Motor neuron (in vitro differentiated cells): ENCODE measurements at regions of chr14 and their contacts with region 1.

Region 1: DNA sequence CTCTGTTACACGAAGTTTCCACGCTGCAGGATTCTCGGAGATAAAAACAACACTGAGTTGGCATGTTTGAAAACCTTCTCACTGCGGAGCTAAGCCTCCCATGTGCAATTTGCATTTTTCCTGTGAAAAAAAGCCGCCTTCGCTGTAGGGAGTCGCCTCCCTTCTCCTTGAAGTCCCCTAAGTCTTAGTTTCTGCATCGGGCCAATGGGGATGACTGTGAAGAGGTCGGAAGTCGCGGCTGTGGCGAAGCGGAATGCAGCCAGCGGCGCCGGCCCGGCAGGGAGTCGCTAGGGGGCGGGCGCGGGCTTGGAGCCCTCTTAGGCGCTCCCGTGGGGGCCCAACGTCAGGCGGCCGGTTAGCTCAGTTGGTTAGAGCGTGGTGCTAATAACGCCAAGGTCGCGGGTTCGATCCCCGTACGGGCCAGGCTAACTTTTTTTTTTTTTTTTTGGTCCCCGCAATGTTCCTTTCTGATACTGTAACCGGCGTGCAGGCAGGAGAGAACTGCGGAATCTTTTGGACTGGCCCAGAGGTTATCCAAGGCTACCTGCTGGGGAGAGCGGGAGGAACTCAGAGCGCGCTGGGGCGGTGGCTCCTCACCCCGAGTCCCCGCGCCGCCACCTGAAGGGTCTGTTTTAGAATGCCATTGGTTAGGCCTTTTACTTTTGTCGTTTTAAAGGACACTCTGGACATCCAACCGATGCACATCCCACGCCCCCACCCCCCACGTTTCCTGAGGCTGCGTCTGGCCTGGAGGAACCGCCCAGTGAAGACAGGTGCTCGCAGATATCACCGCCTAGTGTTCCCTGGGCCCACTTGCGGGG is 2.6 kb upstream of the ZNF839 start:
- ATAC-seq: peak; percentile 65 to 81 (median 74)
- H3K4me3 ChIP-seq: peak overlapping the region; percentile 40 to 53 (median 46)
- H3K27ac ChIP-seq: peak overlapping the region; percentile 44 to 78
- H3K4me1 ChIP-seq: peaks cover 17 to 25% of the 10 kb centered on the region in 2 donors

Region 2: GRCh38 chr14:101739446-101740141 is 577.4 kb before region 1 on chr14:
- in situ Hi-C with region 1: no loop called
- ATAC-seq: no peak
- H3K4me3 ChIP-seq: no peak overlapping the region
- H3K27ac ChIP-seq: no peak overlapping the region
- H3K4me1 ChIP-seq: no peaks in the 10 kb centered on the region

Region 3: GRCh38 chr14:101964297-101965144 is 352.4 kb before region 1 on chr14 and contains the start of gene DYNC1H1:
- in situ Hi-C with region 1: loop called in 5 of 9 experiments (anchors 25 kb)
- ATAC-seq: peak; percentile 63 to 90 (median 88)
- H3K4me3 ChIP-seq: peak within 1 kb of the TSS; percentile 82 to 99 (median 94)
- H3K27ac ChIP-seq: peak within 1 kb of the TSS; percentile 83 to 96
- H3K4me1 ChIP-seq: peaks cover 6 to 13% of the 10 kb centered on the region in 2 donors
- total RNA-seq, gene DYNC1H1: 424 to 616 (median 552) TPM

Region 4: GRCh38 chr14:102063091-102063802 is 253.7 kb before region 1 on chr14:
- in situ Hi-C with region 1: loop called in 2 of 9 experiments (anchors 25 kb)
- ATAC-seq: peak; percentile 47 to 96 (median 70)
- H3K4me3 ChIP-seq: no peak overlapping the region
- H3K27ac ChIP-seq: no peak overlapping the region
- H3K4me1 ChIP-seq: peaks cover 0 to 1% of the 10 kb centered on the region in 2 donors

Region 5: DNA sequence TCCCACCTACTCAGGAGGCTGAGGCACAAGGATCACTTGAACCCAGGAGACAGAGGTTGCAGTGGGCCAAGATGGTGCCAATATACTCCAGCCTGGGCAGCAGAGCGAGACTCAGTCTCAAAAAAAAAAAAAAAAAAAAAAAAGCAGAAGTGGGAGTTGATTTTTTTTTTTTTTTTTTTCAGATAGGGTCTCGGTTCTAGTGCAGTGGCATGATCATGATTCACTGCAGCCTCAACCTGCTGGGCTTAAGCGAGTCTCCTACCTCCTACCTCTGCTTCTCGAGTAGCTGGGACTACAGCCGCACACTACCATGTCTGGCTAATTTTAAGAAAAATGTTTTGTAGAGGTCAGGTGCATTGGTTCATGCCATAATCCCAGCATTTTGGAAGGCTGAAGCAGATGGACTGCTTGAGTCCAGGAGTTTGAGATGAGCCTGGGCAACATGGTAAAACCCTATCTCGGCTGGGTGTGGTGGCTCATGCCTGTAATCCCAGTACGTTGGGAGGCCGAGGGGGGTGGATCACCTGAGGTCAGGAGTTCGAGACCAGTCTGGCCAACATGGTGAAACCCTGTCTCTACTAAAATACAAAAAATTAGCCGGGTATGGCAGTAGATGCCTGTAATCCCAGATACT is 213.8 kb before region 1 on chr14:
- in situ Hi-C with region 1: loop called in 1 of 9 experiments (anchors 25 kb)
- ATAC-seq: no peak
- H3K4me3 ChIP-seq: no peak overlapping the region
- H3K27ac ChIP-seq: no peak overlapping the region
- H3K4me1 ChIP-seq: no peaks in the 10 kb centered on the region

Region 6: GRCh38 chr14:102235275-102235897 is 81.6 kb before region 1 on chr14:
- in situ Hi-C with region 1: loop called in 1 of 9 experiments (anchors 10 kb)
- ATAC-seq: peak; percentile 69 to 100 (median 94)
- H3K4me3 ChIP-seq: no peak overlapping the region
- H3K27ac ChIP-seq: no peak overlapping the region
- H3K4me1 ChIP-seq: peaks cover 2 to 3% of the 10 kb centered on the region in 2 donors